Naive thymus-derived CD4-positive, alpha-beta T cell (primary cell): ENCODE measurements at regions of chr11 and their contacts with region 1.

Region 1: GRCh38 chr11:58579192-58580129 is 598 bp downstream of the ZFP91 start:
- DNase-seq: peak; percentile 85 to 93 (median 90)
- ATAC-seq: peak; percentile 60
- H3K4me3 ChIP-seq: peak overlapping the region; percentile 85
- H3K4me3 Mint-ChIP-seq: peak overlapping the region; percentile 95 to 100 (median 98)
- H3K27ac ChIP-seq: peak overlapping the region; percentile 98
- H3K27ac Mint-ChIP-seq: peak overlapping the region; percentile 98 to 100 (median 100)
- H3K4me1 ChIP-seq: peaks cover 42 to 58% of the 10 kb centered on the region in 2 donors
- H3K4me1 Mint-ChIP-seq: peaks cover 27 to 80% (median 70%) of the 10 kb centered on the region in 7 donors
- H3K27me3 ChIP-seq: no peaks in the 10 kb centered on the region
- H3K27me3 Mint-ChIP-seq: peaks cover 0 to 5% (median 0%) of the 10 kb centered on the region in 5 donors

Region 2: DNA sequence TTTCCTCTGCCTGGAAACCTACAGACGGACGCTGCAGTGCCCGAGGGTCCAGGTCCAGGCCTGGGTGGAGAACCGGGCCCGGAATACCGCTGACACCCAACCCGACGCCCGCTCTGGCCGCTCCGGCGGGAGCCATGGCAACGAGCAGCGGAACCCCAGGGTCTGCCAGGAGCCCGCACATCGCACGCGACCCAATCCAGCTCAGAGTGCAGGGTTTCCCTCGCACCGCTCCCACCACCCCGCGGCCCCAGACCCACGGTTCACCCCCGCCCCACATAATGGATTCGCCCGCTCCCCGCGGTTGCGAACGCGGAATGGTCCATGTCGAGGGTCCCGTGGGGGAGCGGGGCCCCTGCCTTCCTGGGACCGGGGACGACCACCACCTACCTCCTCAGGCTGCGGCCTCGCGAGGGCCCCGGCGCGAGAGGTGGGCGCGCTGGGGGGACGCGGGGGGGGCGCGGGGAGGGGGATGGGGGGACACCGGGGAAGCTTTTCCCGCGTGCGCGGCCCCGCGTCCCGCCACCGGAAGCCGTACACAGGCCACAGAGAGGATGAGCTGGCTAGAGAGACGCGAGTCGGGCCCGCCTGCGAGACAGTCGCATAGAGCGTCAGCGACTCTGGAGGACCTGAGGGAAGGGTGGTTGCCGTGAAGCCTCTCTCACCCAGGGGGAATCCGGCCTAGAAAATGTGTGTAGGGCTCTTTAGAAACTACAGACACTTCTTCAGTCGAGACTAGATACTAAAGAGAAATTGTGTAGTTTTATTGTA is 1243.9 kb before region 1 on chr11 and contains the start of gene SSRP1:
- CTCF ChIA-PET with region 1: no interaction called
- POLR2A ChIA-PET with region 1: no interaction called
- intact Hi-C with region 1: loop called (anchors 1 to 5 kb)
- DNase-seq: peak; percentile 64 to 90 (median 85)
- ATAC-seq: peak; percentile 99
- H3K4me3 ChIP-seq: peak within 1 kb of the TSS; percentile 77
- H3K4me3 Mint-ChIP-seq: peak within 1 kb of the TSS; percentile 91 to 98 (median 96)
- H3K27ac ChIP-seq: peak within 1 kb of the TSS; percentile 91
- H3K27ac Mint-ChIP-seq: peak within 1 kb of the TSS; percentile 96 to 100 (median 99)
- H3K4me1 ChIP-seq: peaks cover 15 to 19% of the 10 kb centered on the region in 2 donors
- H3K4me1 Mint-ChIP-seq: peaks cover 18 to 44% (median 35%) of the 10 kb centered on the region in 7 donors
- H3K27me3 ChIP-seq: no peaks in the 10 kb centered on the region
- H3K27me3 Mint-ChIP-seq: peaks cover 0 to 2% (median 0%) of the 10 kb centered on the region in 5 donors
- total RNA-seq, gene SSRP1: 46.9 to 146 (median 70.1) TPM

Region 3: DNA sequence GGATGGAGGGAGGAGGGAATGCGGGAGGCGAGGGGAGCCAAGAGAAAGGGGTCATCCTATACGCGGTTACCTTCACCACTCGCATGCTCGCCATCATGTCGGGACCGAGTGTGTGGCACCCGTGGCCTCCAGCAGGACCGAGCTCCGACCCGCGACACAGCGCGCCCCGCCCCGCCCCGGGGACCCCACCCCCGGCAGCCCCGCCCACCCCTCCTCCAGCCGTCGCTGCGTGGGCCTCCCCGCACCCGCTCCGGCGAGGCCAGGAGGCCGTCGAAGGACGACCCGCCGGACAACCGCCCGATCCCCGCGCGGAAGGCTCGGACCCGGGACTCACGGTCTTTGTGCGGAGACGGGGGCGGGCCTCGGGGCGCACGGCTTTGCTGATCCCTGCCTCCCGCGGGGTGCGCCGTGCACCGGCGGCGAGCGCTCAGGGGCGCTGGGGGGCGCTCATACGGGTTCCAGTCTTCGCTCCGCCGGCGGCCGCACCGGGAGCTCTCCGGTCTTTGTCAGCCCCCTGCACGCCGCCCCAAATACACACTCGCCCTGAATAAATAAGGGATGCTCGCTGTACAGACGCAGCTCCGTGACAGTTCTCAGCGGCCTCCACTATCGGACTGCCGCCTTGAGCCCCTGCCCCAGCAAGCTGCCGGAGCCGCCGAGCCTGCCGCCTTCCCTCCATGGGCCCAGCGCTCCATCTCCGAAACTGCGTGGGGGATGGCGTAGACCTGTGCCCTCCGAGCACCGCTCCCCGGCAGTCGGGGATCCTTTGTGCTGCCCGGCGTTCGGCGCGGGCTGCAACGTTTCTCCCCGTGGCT is 1011.7 kb before region 1 on chr11 and contains the start of gene UBE2L6:
- CTCF ChIA-PET with region 1: no interaction called
- POLR2A ChIA-PET with region 1: no interaction called
- intact Hi-C with region 1: loop called (anchors 1 kb)
- DNase-seq: peak; percentile 51 to 74 (median 67)
- ATAC-seq: peak; percentile 90
- H3K4me3 ChIP-seq: peak within 1 kb of the TSS; percentile 99
- H3K4me3 Mint-ChIP-seq: peak within 1 kb of the TSS; percentile 92 to 100 (median 99)
- H3K27ac ChIP-seq: peak within 1 kb of the TSS; percentile 97
- H3K27ac Mint-ChIP-seq: peak within 1 kb of the TSS; percentile 95 to 100 (median 98)
- H3K4me1 ChIP-seq: peaks cover 9 to 17% of the 10 kb centered on the region in 2 donors
- H3K4me1 Mint-ChIP-seq: peaks cover 37 to 65% (median 50%) of the 10 kb centered on the region in 7 donors
- H3K27me3 ChIP-seq: no peaks in the 10 kb centered on the region
- H3K27me3 Mint-ChIP-seq: no peaks in the 10 kb centered on the region
- total RNA-seq, gene UBE2L6: 51.1 to 326 (median 64.2) TPM

Region 4: GRCh38 chr11:57741132-57742086 is 838.1 kb before region 1 on chr11 and contains the start of gene SELENOH:
- CTCF ChIA-PET with region 1: no interaction called
- POLR2A ChIA-PET with region 1: interaction called, 18 read pairs
- intact Hi-C with region 1: loop called (anchors 1 kb)
- DNase-seq: peak; percentile 75 to 96 (median 91)
- ATAC-seq: peak; percentile 94
- H3K4me3 ChIP-seq: peak within 1 kb of the TSS; percentile 86
- H3K4me3 Mint-ChIP-seq: peak within 1 kb of the TSS; percentile 90 to 100 (median 99)
- H3K27ac ChIP-seq: peak within 1 kb of the TSS; percentile 93
- H3K27ac Mint-ChIP-seq: peak within 1 kb of the TSS; percentile 97 to 100 (median 98)
- H3K4me1 ChIP-seq: peaks cover 16 to 23% of the 10 kb centered on the region in 2 donors
- H3K4me1 Mint-ChIP-seq: peaks cover 12 to 50% (median 41%) of the 10 kb centered on the region in 7 donors
- H3K27me3 ChIP-seq: no peaks in the 10 kb centered on the region
- H3K27me3 Mint-ChIP-seq: no peaks in the 10 kb centered on the region
- total RNA-seq, gene SELENOH: 93.6 to 193 (median 124) TPM

Region 5: GRCh38 chr11:58567889-58568512 is 11.5 kb before region 1 on chr11:
- CTCF ChIA-PET with region 1: interaction called, 27 read pairs
- POLR2A ChIA-PET with region 1: interaction called, 60 read pairs
- intact Hi-C with region 1: loop called in 1 of 2 experiments (anchors 1 kb)
- DNase-seq: peak; percentile 48 to 79 (median 75)
- ATAC-seq: peak; percentile 99
- H3K4me3 ChIP-seq: no peak overlapping the region
- H3K4me3 Mint-ChIP-seq: peak overlapping the region; percentile 20 to 71 (median 62)
- H3K27ac ChIP-seq: no peak overlapping the region
- H3K27ac Mint-ChIP-seq: peak overlapping the region in 8 of 9 donors; percentile 0 to 89 (median 49)
- H3K4me1 ChIP-seq: peaks cover 24 to 53% of the 10 kb centered on the region in 2 donors
- H3K4me1 Mint-ChIP-seq: peaks cover 43 to 79% (median 58%) of the 10 kb centered on the region in 7 donors
- H3K27me3 ChIP-seq: no peaks in the 10 kb centered on the region
- H3K27me3 Mint-ChIP-seq: no peaks in the 10 kb centered on the region

Region 6: GRCh38 chr11:58788355-58789023 is 209.0 kb after region 1 on chr11:
- CTCF ChIA-PET with region 1: interaction called, 4 read pairs
- POLR2A ChIA-PET with region 1: interaction called, 3 read pairs
- intact Hi-C with region 1: loop called (anchors 1 to 5 kb)
- DNase-seq: peak in 8 of 9 donors; percentile 27 to 79 (median 74)
- ATAC-seq: peak; percentile 93
- H3K4me3 ChIP-seq: no peak overlapping the region
- H3K4me3 Mint-ChIP-seq: no peak overlapping the region
- H3K27ac ChIP-seq: no peak overlapping the region
- H3K27ac Mint-ChIP-seq: peak overlapping the region in 1 of 9 donors; percentile 77
- H3K4me1 ChIP-seq: no peaks in the 10 kb centered on the region
- H3K4me1 Mint-ChIP-seq: peaks cover 0 to 4% (median 0%) of the 10 kb centered on the region in 7 donors
- H3K27me3 ChIP-seq: no peaks in the 10 kb centered on the region
- H3K27me3 Mint-ChIP-seq: peaks cover 1 to 21% (median 6%) of the 10 kb centered on the region in 5 donors

Region 7: DNA sequence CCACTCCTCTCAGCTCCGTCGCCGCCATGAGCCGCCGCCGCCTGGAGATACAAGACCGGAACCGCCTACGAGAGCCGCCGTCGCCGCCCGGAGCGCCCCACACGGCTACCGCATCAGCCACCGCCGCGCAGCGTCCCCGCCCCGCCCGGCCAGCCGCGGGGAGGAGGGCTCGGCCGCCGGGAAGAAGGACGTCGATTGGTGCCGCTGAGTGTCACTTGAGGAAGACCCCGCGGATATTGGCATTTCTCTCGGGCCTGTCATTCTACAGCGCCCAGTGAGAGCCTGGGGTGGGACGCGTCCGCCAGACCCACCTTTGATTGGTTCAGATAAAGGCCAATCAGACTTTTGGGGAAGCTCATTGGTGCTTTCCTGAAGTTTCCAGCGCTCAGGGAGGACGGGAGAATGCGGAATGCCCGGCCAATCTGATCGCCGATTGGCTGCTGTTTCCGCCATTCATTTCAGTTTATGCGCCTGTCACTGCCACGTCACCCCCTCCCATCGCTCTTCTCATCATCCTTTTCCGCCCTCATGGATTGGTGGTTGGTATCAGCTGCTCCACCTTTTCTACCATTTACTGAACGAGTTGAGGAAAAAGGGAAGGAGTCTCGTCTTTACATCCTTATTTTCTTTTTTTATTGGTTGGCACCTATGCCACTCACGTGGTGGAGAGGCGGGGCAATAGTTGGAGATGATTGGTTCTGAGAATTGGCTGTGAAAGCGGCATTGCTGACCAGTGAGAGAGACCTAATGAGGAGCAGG is 1036.4 kb after region 1 on chr11 and contains the start of gene OSBP:
- CTCF ChIA-PET with region 1: no interaction called
- POLR2A ChIA-PET with region 1: interaction called, 4 read pairs
- intact Hi-C with region 1: loop called in 1 of 2 experiments (anchors 1 kb)
- DNase-seq: peak; percentile 86 to 100 (median 99)
- ATAC-seq: peak; percentile 84
- H3K4me3 ChIP-seq: peak within 1 kb of the TSS; percentile 72
- H3K4me3 Mint-ChIP-seq: peak within 1 kb of the TSS; percentile 82 to 99 (median 94)
- H3K27ac ChIP-seq: peak within 1 kb of the TSS; percentile 93
- H3K27ac Mint-ChIP-seq: peak within 1 kb of the TSS; percentile 84 to 98 (median 94)
- H3K4me1 ChIP-seq: peaks cover 26 to 29% of the 10 kb centered on the region in 2 donors
- H3K4me1 Mint-ChIP-seq: peaks cover 35 to 54% (median 41%) of the 10 kb centered on the region in 7 donors
- H3K27me3 ChIP-seq: no peaks in the 10 kb centered on the region
- H3K27me3 Mint-ChIP-seq: no peaks in the 10 kb centered on the region
- total RNA-seq, gene OSBP: 39.8 to 57.6 (median 52.4) TPM